SK-N-SH (cell line): ENCODE measurements at regions of chr16 and their contacts with region 1.

Region 1: DNA sequence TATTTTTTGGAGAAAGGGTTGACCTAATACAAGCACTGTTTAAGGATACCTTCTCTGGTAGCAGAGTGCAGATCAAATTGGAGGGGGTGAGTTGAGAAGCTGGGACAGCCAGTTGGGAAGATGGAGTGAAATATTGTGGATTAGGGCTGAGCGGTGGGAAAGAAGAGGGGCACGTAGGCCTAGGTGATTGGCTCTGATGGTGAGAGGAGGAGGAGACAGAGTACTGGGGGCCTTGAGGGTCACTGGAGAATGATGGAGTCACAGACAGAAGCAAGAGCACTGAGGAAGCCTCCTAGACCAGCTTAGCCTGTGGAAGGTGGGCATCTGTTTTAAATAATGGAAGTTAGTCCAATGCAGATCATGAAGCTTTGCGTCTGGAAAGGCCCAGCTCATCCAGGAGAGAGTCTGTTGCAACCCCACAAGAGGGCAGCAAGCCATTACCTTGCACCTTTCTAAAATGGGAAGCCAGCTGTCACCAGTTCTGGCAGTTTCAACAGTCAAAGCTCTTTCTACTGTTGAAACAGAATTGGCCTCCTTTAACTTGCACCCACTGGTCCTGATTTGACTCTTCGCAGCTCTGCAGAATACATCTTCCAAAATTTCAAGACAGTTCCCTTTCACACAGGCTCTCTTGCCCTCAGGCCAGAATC is 11.8 kb downstream of the SLC9A5 start:
- DNase-seq: peak; percentile 68
- H3K4me3 ChIP-seq: no peak overlapping the region
- H3K27ac ChIP-seq: peak overlapping the region in 1 of 2 experiments; percentile 62; a peak in 1 of 4 replicates
- H3K4me1 ChIP-seq: peaks cover 0 to 8% of the 10 kb centered on the region in 2 experiments; a peak in 1 of 4 replicates
- H3K27me3 ChIP-seq: no peaks in the 10 kb centered on the region
- CTCF ChIP-seq: peak; percentile 65
- EP300 ChIP-seq: no peak
- RAD21 ChIP-seq: peak; percentile 86

Region 2: DNA sequence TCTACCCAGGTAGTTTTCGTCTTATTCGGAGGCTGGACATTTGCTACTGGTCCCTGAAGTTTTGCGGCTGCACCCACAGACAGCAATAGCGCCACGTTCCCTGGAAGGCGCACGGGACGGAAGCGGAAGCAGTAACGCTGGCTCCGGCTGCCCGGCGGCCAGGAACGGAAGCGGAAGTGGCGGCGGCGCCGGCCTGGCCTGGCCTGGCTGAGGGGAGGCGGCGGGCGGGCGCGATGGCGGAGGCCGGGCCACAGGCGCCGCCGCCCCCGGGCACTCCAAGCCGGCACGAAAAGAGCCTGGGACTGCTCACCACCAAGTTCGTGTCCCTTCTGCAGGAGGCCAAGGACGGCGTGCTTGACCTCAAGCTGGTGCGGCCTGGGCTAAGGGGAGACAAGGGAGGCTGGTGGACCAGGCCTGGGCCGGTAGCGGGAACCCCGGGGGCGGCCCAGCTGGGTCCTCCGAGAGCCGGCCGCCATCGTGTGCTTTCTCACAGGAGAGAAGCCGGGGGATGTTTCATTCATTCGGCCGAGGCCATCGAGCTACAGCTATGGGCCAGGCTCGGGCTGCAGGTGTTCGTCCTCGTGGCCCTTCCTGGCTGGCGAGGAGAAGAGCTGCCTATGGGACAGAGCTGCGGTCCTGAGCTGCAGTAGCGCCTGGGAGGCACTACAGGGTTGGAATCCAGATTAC is 68.4 kb before region 1 on chr16 and contains the start of gene E2F4:
- CTCF ChIA-PET with region 1: no interaction called
- POLR2A ChIA-PET with region 1: no interaction called
- DNase-seq: peak; percentile 97
- H3K4me3 ChIP-seq: peak within 1 kb of the TSS; percentile 96 to 99
- H3K27ac ChIP-seq: peak within 1 kb of the TSS; percentile 76 to 80
- H3K4me1 ChIP-seq: peaks cover 9 to 25% of the 10 kb centered on the region in 2 experiments; a peak in 3 of 4 replicates
- H3K27me3 ChIP-seq: no peaks in the 10 kb centered on the region
- CTCF ChIP-seq: no peak
- EP300 ChIP-seq: 0 out of 4 replicates have a peak, but pooled peaks of 1 of the 2 experiments have one; percentile 10
- RAD21 ChIP-seq: no peak
- polyA plus RNA-seq, gene E2F4: 168 and 210 TPM in 2 replicates

Region 3: GRCh38 chr16:67226804-67227557 is 33.6 kb before region 1 on chr16 and contains the start of gene TMEM208:
- CTCF ChIA-PET with region 1: no interaction called
- POLR2A ChIA-PET with region 1: no interaction called
- DNase-seq: peak; percentile 97
- H3K4me3 ChIP-seq: peak within 1 kb of the TSS; percentile 92 to 100
- H3K27ac ChIP-seq: peak within 1 kb of the TSS; percentile 72 to 83
- H3K4me1 ChIP-seq: peaks cover 0 to 22% of the 10 kb centered on the region in 2 experiments; a peak in 2 of 4 replicates
- H3K27me3 ChIP-seq: no peaks in the 10 kb centered on the region
- CTCF ChIP-seq: peak; percentile 48
- EP300 ChIP-seq: no peak
- RAD21 ChIP-seq: no peak
- polyA plus RNA-seq, gene TMEM208: 98.2 and 130 TPM in 2 replicates

Region 4: DNA sequence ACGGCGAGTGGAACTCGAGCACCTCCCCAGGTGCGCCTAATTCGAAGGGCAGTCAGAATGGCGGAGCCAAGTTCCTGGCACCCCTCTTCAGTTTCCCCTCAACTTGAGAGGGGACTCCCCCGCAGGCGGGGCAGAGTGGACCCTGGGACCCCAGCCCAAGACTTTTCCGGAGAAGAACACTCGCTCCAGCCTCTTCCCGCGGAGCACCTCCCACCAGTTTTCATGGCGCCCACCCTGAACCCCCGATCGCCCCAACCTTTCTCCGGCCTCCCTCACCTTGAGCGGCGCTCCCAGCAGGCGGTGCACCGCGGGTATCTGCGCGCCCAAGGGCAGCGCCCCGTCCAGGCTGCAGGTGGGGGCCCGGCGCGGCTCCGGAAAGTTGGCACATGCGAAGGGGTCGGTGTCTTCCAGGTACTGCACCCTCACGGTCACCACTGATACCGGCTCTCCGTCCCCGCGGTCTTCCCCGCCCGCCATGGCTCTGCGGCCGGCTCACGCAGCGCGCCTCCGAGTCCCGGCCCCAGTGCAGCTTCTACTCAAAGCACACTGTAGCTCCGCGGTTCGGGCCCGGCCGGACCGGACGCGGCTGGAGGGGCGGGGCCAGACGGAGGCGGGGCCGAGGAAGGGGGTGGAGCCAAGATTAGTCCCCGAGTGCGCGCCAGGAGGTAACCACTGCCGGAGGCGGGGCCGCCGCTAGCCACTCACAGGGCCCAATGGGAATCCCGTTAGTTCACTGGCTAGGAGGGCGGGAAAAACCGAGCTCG is 13.4 kb before region 1 on chr16 and contains the start of gene FHOD1:
- CTCF ChIA-PET with region 1: interaction called, 13 read pairs
- POLR2A ChIA-PET with region 1: interaction called, 4 read pairs
- DNase-seq: peak; percentile 93
- H3K4me3 ChIP-seq: peak within 1 kb of the TSS; percentile 92 to 95
- H3K27ac ChIP-seq: peak within 1 kb of the TSS; percentile 96
- H3K4me1 ChIP-seq: peaks cover 42 to 46% of the 10 kb centered on the region in 2 experiments
- H3K27me3 ChIP-seq: no peaks in the 10 kb centered on the region
- CTCF ChIP-seq: no peak
- EP300 ChIP-seq: no peak
- RAD21 ChIP-seq: no peak
- polyA plus RNA-seq, gene FHOD1: 53.2 and 70.9 TPM in 2 replicates

Region 5: DNA sequence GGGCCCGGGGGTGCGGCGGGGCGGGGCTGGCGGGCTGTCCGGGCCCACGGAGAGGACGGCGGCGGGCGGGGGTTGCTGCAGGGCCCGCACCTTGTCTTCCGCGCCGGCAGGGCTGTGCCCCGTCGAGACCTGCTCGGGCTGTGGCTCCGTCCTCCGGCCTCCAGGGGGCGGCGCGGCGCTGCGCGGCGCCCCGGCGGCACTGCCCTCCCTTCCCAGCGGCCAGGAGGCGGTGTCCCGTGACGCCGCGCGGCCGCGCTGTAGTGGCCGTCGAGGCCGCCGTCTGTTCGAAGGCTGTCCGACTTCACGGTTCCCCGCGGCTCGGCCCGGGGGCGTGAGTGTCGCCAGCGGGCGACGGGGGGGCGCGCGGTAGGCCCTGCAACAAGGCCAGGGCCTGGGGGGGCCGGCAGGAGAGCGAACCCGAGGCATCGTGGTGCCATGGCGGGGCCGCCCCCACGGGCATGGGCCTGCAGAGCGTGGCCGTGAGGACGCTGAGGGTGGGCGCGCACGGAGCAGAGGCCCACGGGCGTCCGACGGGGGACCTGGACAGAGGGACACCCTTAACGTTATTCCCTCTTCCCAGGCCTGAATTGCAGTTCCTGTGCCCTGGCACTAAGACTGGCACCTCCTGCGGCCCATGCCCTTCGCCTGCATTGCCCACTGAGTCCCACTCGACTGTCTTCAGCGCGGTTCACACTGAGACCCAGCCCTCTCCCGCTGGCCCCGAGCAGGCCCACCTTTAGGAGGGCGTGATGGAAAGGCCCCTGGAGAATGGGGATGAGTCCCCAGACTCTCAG is 18.9 kb after region 1 on chr16 and contains the start of gene PLEKHG4:
- CTCF ChIA-PET with region 1: interaction called, 24 read pairs
- POLR2A ChIA-PET with region 1: no interaction called
- DNase-seq: peak; percentile 99
- H3K4me3 ChIP-seq: peak within 1 kb of the TSS; percentile 64
- H3K27ac ChIP-seq: peak within 1 kb of the TSS; percentile 59 to 100
- H3K4me1 ChIP-seq: peaks cover 25 to 41% of the 10 kb centered on the region in 2 experiments; a peak in 3 of 4 replicates
- H3K27me3 ChIP-seq: no peaks in the 10 kb centered on the region
- CTCF ChIP-seq: peak; percentile 62
- EP300 ChIP-seq: 0 out of 4 replicates have a peak, but pooled peaks of 1 of the 2 experiments have one; percentile 8
- RAD21 ChIP-seq: peak; percentile 54
- polyA plus RNA-seq, gene PLEKHG4: 65.5 and 87.0 TPM in 2 replicates

Region 6: DNA sequence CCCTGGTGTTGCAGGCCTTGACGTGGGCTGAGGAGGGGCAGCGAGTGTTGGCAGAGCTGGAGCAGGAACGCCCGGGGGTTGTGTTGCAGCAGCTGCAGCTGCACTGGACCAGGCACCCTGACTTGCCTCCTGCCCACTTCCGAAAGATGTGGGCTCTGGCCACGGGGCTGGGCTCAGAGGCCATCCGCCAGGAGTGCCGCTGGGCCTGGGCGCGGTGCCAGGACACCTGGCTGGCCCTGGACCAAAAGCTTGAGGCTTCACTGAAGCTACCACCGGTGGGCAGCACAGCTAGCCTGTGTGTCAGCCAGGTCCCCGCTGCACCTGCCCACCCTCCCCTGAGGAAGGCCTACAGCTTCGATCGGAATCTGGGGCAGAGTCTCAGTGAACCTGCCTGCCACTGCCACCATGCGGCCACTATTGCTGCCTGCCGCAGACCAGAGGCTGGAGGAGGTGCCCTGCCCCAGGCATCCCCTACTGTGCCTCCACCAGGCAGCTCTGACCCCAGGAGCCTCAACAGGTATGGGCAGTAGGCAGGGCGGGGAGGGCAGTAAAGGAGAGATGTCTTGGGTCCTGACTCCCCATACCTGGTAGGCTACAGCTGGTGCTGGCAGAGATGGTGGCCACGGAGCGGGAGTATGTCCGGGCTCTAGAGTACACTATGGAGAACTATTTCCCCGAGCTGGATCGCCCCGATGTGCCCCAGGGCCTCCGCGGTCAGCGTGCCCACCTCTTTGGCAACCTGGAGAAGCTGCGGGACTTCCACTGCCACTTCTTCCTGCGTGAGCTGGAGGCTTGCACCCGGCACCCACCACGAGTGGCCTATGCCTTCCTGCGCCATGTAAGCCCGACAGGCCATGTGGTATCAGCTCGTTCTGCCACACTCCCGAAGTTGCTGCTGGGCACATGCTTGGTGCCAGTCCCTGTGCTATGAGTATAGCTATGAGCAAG is 24.4 kb after region 1 on chr16:
- CTCF ChIA-PET with region 1: interaction called, 24 read pairs
- POLR2A ChIA-PET with region 1: no interaction called
- DNase-seq: peak; percentile 69
- H3K4me3 ChIP-seq: no peak overlapping the region
- H3K27ac ChIP-seq: peak overlapping the region in 1 of 2 experiments; percentile 48; a peak in 1 of 4 replicates
- H3K4me1 ChIP-seq: peaks cover 2 to 30% of the 10 kb centered on the region in 2 experiments; a peak in 2 of 4 replicates
- H3K27me3 ChIP-seq: no peaks in the 10 kb centered on the region
- CTCF ChIP-seq: peak; percentile 34
- EP300 ChIP-seq: no peak
- RAD21 ChIP-seq: peak; percentile 31; the same call in 1 of the 2 replicates

Region 7: DNA sequence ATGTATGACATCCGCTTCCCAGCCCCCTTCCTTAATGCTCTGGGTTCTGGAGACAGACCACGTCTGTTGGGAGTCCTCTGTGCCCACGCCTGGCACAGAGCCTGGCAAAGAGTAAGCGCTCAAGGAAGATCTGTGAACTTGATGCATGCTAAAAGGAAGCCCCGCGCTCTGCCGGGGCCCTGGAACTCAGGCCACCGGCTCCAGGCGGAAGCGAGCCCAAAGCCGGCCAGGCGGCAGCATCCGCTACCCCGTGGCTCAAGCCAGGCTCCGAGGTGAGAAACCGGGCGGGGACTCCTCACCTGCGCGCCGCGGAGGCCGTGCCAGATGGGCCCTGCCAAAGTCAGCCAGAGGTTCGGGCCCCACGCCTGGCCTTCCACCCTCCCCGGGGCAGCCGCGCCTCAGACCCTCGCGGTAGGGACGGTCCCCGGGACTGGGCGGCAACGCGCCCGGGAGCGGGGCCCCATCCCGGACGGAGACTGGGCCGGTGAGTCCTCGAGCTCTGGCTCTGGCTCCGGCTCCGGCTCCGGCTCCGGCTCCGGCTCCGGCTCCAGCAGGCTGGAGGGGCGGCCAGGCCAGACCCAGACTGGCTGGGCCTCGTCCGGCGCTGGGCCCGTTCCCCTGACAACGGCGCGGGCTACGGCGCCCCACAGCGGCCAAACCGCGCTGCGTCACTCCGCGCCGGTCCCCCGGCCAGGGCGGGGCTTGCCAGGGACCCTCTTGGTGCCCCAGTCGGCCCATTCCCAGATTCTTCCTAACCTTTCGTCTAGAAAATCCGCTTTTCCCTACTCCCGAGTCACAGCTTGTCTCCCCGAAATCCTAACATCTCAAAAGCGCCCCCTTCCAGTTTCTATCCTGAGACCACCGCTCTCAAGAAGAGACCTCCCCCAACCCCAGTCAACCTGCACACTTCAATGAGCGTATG is 155.6 kb after region 1 on chr16 and contains the start of gene ZDHHC1:
- CTCF ChIA-PET with region 1: interaction called, 12 read pairs
- POLR2A ChIA-PET with region 1: no interaction called
- DNase-seq: peak; percentile 96
- H3K4me3 ChIP-seq: peak within 1 kb of the TSS; percentile 64 to 66
- H3K27ac ChIP-seq: peak within 1 kb of the TSS; percentile 53 to 79
- H3K4me1 ChIP-seq: no peaks in the 10 kb centered on the region; a peak in 1 of 4 replicates
- H3K27me3 ChIP-seq: no peaks in the 10 kb centered on the region
- CTCF ChIP-seq: peak; percentile 56
- EP300 ChIP-seq: no peak
- RAD21 ChIP-seq: peak; percentile 70
- polyA plus RNA-seq, gene ZDHHC1: 14.2 and 15.8 TPM in 2 replicates

Region 8: DNA sequence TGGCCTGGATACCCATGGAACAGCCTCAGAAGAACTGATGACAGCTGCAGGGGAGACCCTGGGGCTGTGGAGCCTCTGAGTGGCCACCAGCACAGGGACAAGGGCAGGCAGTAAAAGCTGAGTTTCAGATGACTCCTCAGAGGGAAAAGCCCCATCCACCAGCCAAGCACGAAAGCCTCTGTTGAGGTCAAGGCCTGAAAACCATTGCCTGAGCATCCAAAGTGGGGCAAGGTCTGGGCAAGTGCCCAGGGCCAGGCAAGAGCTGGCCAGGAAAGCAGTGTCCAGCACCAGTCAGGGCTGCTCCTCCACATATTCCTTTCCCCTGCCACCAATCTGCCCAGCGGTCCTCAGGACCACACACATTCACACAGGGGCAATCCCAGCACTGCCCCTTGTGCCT is 204.0 kb after region 1 on chr16:
- CTCF ChIA-PET with region 1: interaction called, 10 read pairs
- POLR2A ChIA-PET with region 1: no interaction called
- DNase-seq: no peak
- H3K4me3 ChIP-seq: no peak overlapping the region
- H3K27ac ChIP-seq: no peak overlapping the region
- H3K4me1 ChIP-seq: peaks cover 13 to 29% of the 10 kb centered on the region in 2 experiments; a peak in 3 of 4 replicates
- H3K27me3 ChIP-seq: no peaks in the 10 kb centered on the region
- CTCF ChIP-seq: no peak
- EP300 ChIP-seq: no peak
- RAD21 ChIP-seq: no peak